BJ (cell line): ENCODE measurements at regions of chr19 and their contacts with region 1.

Region 1: GRCh38 chr19:38420935-38421334 is 5.1 kb downstream of the RASGRP4 start:
- DNase-seq: no peak
- H3K4me3 ChIP-seq: no peak overlapping the region
- H3K27me3 ChIP-seq: peaks cover 9% of the 10 kb centered on the region
- CTCF ChIP-seq: no peak

Region 2: DNA sequence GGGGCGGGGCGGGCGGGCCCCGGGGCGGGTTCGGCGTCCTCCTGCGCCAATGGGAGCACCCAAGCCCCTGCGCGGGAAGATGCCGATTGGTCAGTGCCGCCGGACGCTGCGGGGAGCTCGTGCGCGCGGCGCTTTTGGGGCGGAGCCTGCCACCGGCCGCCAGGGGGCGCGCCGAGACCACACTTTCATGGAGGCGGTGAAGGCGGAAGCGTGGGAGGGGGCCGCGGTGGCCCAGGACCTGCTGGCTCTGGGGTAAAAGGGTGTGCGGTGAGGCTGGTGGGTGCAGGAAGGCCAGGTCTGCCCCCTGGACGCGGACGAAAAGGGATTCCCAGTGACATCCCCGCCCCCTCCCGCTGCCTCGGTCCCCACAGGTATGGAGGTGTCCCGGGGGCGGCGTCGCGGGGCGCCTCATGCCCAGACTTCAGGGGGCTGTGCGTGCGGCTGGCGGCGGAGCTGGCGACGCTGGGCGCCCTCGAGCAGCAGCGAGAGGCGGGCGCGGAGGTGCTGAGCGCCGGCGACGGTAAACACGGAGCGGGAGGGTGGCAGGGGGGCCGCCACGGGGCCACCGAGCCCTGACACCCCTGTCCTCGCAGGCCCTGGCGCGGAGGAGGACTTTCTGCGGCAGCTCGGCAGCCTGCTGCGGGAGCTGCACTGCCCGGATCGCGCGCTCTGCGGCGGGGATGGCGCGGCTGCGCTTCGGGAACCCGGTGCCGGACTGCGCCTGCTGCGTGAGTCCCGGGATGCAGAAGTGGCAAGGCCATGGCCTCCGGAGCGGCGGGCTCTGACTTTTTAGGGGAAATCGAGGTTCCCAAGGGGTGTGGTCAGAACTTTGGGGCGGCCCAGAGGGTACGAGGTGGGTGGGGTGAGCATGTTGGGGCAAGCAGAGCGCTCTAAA is 17.7 kb before region 1 on chr19 and contains the start of gene FAM98C:
- CTCF ChIA-PET with region 1: interaction called, 16 read pairs
- POLR2A ChIA-PET with region 1: no interaction called
- DNase-seq: peak; percentile 65
- H3K4me3 ChIP-seq: peak within 1 kb of the TSS; percentile 88
- H3K27me3 ChIP-seq: no peaks in the 10 kb centered on the region
- CTCF ChIP-seq: peak; percentile 74
- polyA plus RNA-seq, gene FAM98C: 9.9 and 12.2 TPM in 2 replicates